ENCODE measurements at regions of chr3 and their contacts with region 1.

Region 1: GRCh38 chr3:75610773-75611172 is 53.4 kb upstream of the FRG2C start:
- DNase-seq: no peak
- H3K4me3 ChIP-seq: no peak overlapping the region
- H3K27ac ChIP-seq: no peak overlapping the region
- H3K4me1 ChIP-seq: no peaks in the 10 kb centered on the region
- H3K27me3 ChIP-seq: no peaks in the 10 kb centered on the region
- CTCF ChIP-seq: no peak
- EP300 ChIP-seq: no peak
- POLR2A ChIP-seq: no peak
- RAD21 ChIP-seq: no peak

Region 2: GRCh38 chr3:75631541-75631940 is 20.8 kb after region 1 on chr3:
- CTCF ChIA-PET with region 1: interaction called, 14 read pairs
- POLR2A ChIA-PET with region 1: no interaction called
- DNase-seq: no peak
- H3K4me3 ChIP-seq: no peak overlapping the region
- H3K27ac ChIP-seq: no peak overlapping the region
- H3K4me1 ChIP-seq: peaks cover 0 to 2% (median 0%) of the 10 kb centered on the region in 4 experiments; a peak in 1 of 7 replicates
- H3K27me3 ChIP-seq: no peaks in the 10 kb centered on the region
- CTCF ChIP-seq: no peak
- EP300 ChIP-seq: no peak
- POLR2A ChIP-seq: no peak
- RAD21 ChIP-seq: no peak

Region 3: DNA sequence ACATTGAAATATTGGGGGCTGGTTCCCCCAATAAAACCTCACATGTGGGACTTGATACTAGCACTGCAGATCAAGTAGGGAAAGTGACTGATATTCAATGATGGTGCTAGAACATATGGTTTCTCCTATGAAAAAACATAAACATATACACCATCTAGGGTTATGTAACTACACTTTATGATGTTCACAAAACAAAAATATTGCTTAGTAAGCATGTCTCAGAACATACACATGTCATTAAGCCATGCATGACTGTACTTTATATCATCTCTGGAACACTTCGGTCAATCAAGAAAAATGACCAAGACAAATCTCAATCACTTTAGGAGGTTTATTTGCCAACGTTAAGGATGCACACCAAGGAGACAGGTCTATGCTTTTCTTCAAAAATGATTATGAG is 117.2 kb after region 1 on chr3:
- CTCF ChIA-PET with region 1: no interaction called
- POLR2A ChIA-PET with region 1: no interaction called
- DNase-seq: no peak
- H3K4me3 ChIP-seq: no peak overlapping the region
- H3K27ac ChIP-seq: no peak overlapping the region
- H3K4me1 ChIP-seq: no peaks in the 10 kb centered on the region
- H3K27me3 ChIP-seq: peaks cover 0 to 1% (median 0%) of the 10 kb centered on the region in 4 experiments; a peak in 1 of 7 replicates
- CTCF ChIP-seq: no peak
- EP300 ChIP-seq: no peak
- POLR2A ChIP-seq: no peak
- RAD21 ChIP-seq: no peak

Region 4: GRCh38 chr3:75863878-75864277 is 253.1 kb after region 1 on chr3:
- CTCF ChIA-PET with region 1: no interaction called
- POLR2A ChIA-PET with region 1: no interaction called
- DNase-seq: no peak
- H3K4me3 ChIP-seq: no peak overlapping the region
- H3K27ac ChIP-seq: no peak overlapping the region
- H3K4me1 ChIP-seq: no peaks in the 10 kb centered on the region
- H3K27me3 ChIP-seq: no peaks in the 10 kb centered on the region
- CTCF ChIP-seq: no peak
- EP300 ChIP-seq: no peak
- POLR2A ChIP-seq: no peak
- RAD21 ChIP-seq: no peak

Region 5: GRCh38 chr3:75983609-75984290 is 373.0 kb after region 1 on chr3:
- CTCF ChIA-PET with region 1: no interaction called
- POLR2A ChIA-PET with region 1: no interaction called
- DNase-seq: no peak
- H3K4me3 ChIP-seq: no peak overlapping the region
- H3K27ac ChIP-seq: no peak overlapping the region
- H3K4me1 ChIP-seq: no peaks in the 10 kb centered on the region
- H3K27me3 ChIP-seq: no peaks in the 10 kb centered on the region
- CTCF ChIP-seq: no peak
- EP300 ChIP-seq: no peak
- POLR2A ChIP-seq: no peak
- RAD21 ChIP-seq: no peak